ENCODE measurements at regions of chr5 and their contacts with region 1.

Region 1: DNA sequence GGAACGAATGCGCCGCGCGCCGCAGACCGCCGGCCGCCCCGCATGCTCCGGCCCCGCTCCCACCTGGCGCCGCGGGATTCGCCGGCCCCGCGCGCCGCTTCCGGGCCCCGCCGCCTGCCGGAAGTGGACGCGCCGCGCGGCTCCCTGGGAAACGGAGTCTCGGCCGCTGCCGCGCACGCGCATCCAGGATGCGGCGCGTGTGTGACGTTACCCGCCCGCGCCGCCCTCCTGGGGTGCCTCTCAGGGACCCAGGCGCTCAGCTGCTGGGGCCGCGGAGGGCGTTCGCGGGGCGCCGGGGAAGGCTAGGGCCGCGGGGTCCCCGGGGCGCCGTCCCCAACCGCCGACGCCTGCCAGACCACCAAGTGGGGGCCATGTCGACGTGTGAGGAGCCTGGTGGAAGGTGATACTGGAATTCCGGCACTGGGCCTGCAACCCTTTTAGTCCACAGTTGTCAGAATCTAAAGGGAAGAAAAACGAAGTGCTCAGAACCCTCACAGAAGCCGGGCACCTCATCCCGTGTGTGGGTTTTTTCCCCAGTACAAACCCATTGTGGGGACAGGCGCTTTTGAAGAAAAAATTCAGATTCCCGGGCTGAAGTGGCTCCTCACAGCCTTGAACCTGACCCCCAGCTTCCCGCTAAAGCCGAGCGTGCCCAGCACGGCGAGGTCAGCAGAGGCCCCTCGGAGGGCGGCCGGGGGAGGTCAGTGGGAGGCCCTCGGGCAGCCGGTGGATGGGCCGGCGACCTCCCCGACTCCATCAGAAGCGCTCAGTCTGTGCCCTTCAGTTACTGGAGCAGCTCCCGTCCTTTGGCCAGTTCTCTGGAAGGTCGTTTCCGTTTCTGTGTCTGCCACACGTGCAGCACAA is at the start of gene CLPTM1L:
- DNase-seq: peak; percentile 91
- H3K4me3 Mint-ChIP-seq: peak within 1 kb of the TSS; percentile 87
- H3K27ac Mint-ChIP-seq: peak within 1 kb of the TSS; percentile 85
- H3K4me1 Mint-ChIP-seq: peaks cover 26% of the 10 kb centered on the region
- H3K27me3 Mint-ChIP-seq: no peaks in the 10 kb centered on the region
- total RNA-seq, gene CLPTM1L: 70.1 to 72.9 TPM

Region 2: GRCh38 chr5:1294835-1295649 is 50.2 kb before region 1 on chr5 and contains the start of gene TERT:
- CTCF ChIA-PET with region 1: no interaction called
- POLR2A ChIA-PET with region 1: interaction called, 5 read pairs
- intact Hi-C with region 1: loop called (anchors 10 kb)
- DNase-seq: peak; percentile 83
- H3K4me3 Mint-ChIP-seq: peak within 1 kb of the TSS; percentile 49
- H3K27ac Mint-ChIP-seq: no peak within 1 kb of the TSS
- H3K4me1 Mint-ChIP-seq: peaks cover 5% of the 10 kb centered on the region
- H3K27me3 Mint-ChIP-seq: no peaks in the 10 kb centered on the region
- total RNA-seq, gene TERT: 4.7 to 7.3 TPM

Region 3: DNA sequence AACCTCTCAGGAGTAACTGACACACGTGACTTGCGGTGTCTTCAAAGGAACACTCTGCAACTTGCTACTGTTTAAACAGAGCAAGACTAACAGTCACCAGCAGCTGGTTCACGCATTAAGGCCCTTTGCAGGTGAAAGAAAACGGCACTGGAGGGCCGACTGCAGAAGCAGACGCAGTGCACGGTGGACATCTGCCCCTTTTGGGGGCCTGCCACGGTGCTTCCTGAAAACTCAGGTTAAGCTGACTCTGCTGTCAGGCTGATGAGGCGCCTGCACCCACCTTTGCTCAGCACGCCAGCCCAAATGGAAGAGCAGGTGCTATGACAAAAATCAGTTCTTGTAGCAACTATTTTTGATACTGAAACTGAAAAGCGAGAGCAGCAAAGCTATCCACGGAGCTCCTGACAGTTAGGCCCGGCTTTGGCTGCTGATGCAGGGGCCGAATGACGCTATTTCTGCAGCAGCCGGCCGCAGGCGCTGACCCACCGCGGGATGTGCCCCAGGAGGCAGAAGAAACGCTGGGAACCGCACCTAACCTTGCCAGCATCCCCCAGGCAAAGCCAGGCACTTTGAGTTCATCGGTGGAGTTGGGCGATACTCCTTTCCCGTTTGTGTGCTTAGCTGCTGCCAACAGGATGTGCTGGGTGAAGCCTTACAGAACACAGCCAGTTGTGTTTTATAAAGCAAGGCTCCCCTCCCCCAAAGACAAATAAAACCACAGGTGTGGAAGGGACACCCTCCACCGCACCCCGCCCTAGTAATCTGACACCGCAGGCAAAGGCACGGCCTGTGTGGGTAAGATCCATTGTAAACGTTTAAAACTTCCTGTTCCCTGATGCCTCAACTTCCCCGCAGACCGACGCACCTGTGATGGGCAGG is 29.3 kb before region 1 on chr5:
- CTCF ChIA-PET with region 1: interaction called, 3 read pairs
- POLR2A ChIA-PET with region 1: interaction called, 4 read pairs
- intact Hi-C with region 1: loop called (anchors 2 kb)
- DNase-seq: peak; percentile 70
- H3K4me3 Mint-ChIP-seq: peak overlapping the region; percentile 53
- H3K27ac Mint-ChIP-seq: peak overlapping the region; percentile 89
- H3K4me1 Mint-ChIP-seq: peaks cover 57% of the 10 kb centered on the region
- H3K27me3 Mint-ChIP-seq: no peaks in the 10 kb centered on the region

Region 4: GRCh38 chr5:1385395-1386273 is 40.4 kb after region 1 on chr5:
- CTCF ChIA-PET with region 1: interaction called, 7 read pairs
- POLR2A ChIA-PET with region 1: interaction called, 4 read pairs
- intact Hi-C with region 1: loop called (anchors 2 kb)
- DNase-seq: peak; percentile 89
- H3K4me3 Mint-ChIP-seq: peak overlapping the region; percentile 92
- H3K27ac Mint-ChIP-seq: peak overlapping the region; percentile 92
- H3K4me1 Mint-ChIP-seq: peaks cover 23% of the 10 kb centered on the region
- H3K27me3 Mint-ChIP-seq: no peaks in the 10 kb centered on the region

Measured in activated CD4-positive, alpha-beta memory T cell treated with anti-CD3 and anti-CD28 coated beads for 36 hours (primary cell).